ENCODE measurements at regions of chr16 and their contacts with region 1.

Region 1: GRCh38 chr16:55842369-55843104 is 9.6 kb upstream of the CES1 start:
- DNase-seq: peak; percentile 45
- ATAC-seq: peak; percentile 80; the same call in 1 of the 2 replicates
- H3K4me3 ChIP-seq: no peak overlapping the region
- H3K27ac ChIP-seq: no peak overlapping the region
- H3K4me1 ChIP-seq: no peaks in the 10 kb centered on the region
- H3K27me3 ChIP-seq: no peaks in the 10 kb centered on the region
- CTCF ChIP-seq: peak; percentile 71
- POLR2A ChIP-seq: no peak
- RAD21 ChIP-seq: peak; percentile 73

Region 2: DNA sequence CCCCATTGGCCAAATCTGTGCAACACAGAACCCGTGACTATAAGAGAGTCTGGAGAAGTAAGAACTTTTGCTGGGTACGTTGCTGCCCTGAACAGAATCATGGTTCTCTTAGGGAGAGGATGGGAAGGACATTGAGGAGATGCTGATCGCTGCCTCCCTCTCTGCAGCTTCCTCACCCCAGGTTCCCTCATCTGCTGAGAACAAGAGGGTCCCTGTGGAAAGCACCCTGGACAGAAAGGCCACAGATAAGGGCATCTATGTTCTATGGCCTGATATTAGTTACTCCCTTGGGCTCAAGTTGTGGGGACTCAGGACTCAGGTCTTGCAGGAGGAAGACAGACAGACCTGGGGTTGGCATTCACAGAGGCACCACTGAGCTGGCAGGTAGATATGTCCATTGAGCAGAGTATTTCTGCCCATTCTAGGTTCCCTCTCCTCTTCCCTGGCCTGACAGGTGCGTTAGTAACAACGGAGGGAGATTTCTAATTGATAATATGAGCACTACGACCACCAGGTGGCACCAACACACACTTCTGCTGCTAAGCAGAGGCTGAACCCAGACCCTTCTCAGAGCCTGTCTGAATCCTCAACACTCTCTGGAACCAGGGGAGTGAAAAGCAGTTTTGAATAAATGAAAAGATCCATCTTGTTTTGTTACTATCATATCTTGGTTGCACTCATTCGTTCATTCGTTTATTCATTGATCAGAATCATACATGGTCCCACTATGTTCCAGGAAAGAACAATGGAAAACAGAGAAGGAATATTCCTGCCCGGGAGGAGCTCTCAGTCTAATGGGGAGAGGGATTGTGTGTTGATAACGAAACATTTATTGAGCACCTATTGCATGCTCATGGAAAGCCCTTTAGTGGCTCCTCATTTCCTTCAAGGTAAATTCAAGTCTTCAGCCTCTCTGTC is 130.3 kb before region 1 on chr16:
- CTCF ChIA-PET with region 1: no interaction called
- POLR2A ChIA-PET with region 1: no interaction called
- dilution Hi-C with region 1: no loop called
- in situ Hi-C with region 1: loop called (anchors 5 kb)
- intact Hi-C with region 1: loop called (anchors 1 kb)
- DNase-seq: peak; percentile 45
- ATAC-seq: peak; percentile 76
- H3K4me3 ChIP-seq: no peak overlapping the region
- H3K27ac ChIP-seq: no peak overlapping the region
- H3K4me1 ChIP-seq: no peaks in the 10 kb centered on the region
- H3K27me3 ChIP-seq: peaks cover 3% of the 10 kb centered on the region
- CTCF ChIP-seq: peak; percentile 58
- POLR2A ChIP-seq: no peak
- RAD21 ChIP-seq: peak; percentile 54